ENCODE measurements at regions of chr13 and their contacts with region 1.

Region 1: DNA sequence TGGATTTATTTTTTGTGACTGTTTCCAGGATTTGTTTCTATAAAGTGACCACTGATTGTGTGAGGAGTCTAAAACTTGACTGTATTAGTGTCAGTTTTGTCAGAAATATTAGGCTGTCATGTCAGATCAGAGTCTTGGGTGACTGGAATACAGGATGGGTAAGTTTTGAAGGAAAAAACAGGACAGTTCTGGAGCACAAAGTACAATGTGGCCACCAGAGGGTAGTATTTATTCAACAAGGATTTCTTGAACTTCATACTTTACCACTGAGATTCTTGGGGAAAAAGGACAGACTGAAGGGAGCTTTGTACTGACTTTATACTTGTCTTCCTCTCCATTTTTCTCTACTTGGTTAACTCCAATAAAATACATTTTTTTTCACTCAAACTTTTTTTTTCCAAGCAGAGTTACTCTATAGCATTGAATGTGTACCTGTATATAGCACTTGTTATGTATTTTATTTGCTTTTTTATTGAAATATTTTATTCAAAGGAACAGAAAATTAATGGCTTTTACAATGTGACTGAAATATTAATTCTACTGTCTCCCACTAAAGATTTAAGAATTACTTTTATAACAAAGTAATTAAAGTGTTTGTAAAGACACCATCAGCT is 51.1 kb downstream of the LMO7 start:
- DNase-seq: no peak
- H3K4me3 ChIP-seq: no peak overlapping the region
- H3K27ac ChIP-seq: no peak overlapping the region
- H3K4me1 ChIP-seq: no peaks in the 10 kb centered on the region
- H3K27me3 ChIP-seq: no peaks in the 10 kb centered on the region
- CTCF ChIP-seq: peak; percentile 28 to 51 (median 45)
- EP300 ChIP-seq: no peak
- POLR2A ChIP-seq: no peak

Region 2: DNA sequence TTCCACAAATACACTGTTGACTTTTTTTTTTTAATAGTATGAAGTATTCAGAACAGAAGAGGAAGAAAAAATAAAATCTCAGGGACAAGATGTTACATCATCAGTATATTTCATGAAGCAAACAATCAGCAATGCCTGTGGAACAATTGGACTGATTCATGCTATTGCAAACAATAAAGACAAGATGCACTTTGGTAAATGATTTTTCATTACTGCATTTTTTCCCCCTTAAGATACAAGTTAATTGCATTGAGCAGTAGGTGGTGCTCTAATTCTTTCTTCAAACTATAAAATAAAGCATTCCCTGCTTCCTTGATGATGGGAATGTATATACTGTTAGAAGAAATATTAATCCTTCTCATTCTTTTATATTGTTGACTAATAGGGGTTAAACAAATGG is 120.6 kb before region 1 on chr13:
- in situ Hi-C with region 1: no loop called
- intact Hi-C with region 1: no loop called
- DNase-seq: no peak
- H3K4me3 ChIP-seq: no peak overlapping the region
- H3K27ac ChIP-seq: no peak overlapping the region
- H3K4me1 ChIP-seq: no peaks in the 10 kb centered on the region
- H3K27me3 ChIP-seq: no peaks in the 10 kb centered on the region
- CTCF ChIP-seq: no peak
- EP300 ChIP-seq: no peak
- POLR2A ChIP-seq: no peak

Region 3: GRCh38 chr13:75771818-75772217 is 84.6 kb after region 1 on chr13:
- in situ Hi-C with region 1: no loop called
- intact Hi-C with region 1: no loop called
- DNase-seq: no peak
- H3K4me3 ChIP-seq: no peak overlapping the region
- H3K27ac ChIP-seq: no peak overlapping the region
- H3K4me1 ChIP-seq: peaks cover 4 to 36% (median 16%) of the 10 kb centered on the region in 4 donors
- H3K27me3 ChIP-seq: no peaks in the 10 kb centered on the region
- CTCF ChIP-seq: no peak
- EP300 ChIP-seq: no peak
- POLR2A ChIP-seq: no peak

Region 4: GRCh38 chr13:75870397-75870903 is 183.2 kb after region 1 on chr13:
- in situ Hi-C with region 1: loop called in 2 of 4 experiments (anchors 25 kb)
- intact Hi-C with region 1: no loop called
- DNase-seq: no peak
- H3K4me3 ChIP-seq: peak overlapping the region in 3 of 4 donors; percentile 13 to 37 (median 23)
- H3K27ac ChIP-seq: no peak overlapping the region
- H3K4me1 ChIP-seq: peaks cover 0 to 6% (median 2%) of the 10 kb centered on the region in 4 donors
- H3K27me3 ChIP-seq: peaks cover 6% of the 10 kb centered on the region
- CTCF ChIP-seq: peak; percentile 65 to 78 (median 70)
- EP300 ChIP-seq: no peak
- POLR2A ChIP-seq: no peak

Region 5: DNA sequence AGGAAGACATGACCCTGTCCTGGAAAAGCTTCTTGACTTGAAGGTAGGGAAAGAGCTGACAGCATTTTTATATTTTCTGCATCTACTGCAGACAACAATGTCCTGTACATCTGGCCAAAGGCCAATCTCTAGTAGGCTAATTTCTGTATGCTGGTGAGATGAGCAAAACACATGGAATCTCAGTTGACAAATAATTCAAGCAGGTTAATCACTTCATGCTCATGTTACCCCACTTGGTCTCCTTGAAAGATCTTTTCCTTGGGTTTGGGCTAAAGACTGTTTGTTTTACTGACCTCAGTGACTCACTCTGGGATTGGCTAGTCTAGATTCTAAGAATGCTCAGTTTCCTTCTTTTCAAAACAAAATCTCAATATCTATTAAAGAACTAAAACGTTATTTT is 247.6 kb after region 1 on chr13:
- in situ Hi-C with region 1: no loop called
- intact Hi-C with region 1: no loop called
- DNase-seq: no peak
- H3K4me3 ChIP-seq: no peak overlapping the region
- H3K27ac ChIP-seq: no peak overlapping the region
- H3K4me1 ChIP-seq: no peaks in the 10 kb centered on the region
- H3K27me3 ChIP-seq: no peaks in the 10 kb centered on the region
- CTCF ChIP-seq: no peak
- EP300 ChIP-seq: no peak
- POLR2A ChIP-seq: no peak

Region 6: DNA sequence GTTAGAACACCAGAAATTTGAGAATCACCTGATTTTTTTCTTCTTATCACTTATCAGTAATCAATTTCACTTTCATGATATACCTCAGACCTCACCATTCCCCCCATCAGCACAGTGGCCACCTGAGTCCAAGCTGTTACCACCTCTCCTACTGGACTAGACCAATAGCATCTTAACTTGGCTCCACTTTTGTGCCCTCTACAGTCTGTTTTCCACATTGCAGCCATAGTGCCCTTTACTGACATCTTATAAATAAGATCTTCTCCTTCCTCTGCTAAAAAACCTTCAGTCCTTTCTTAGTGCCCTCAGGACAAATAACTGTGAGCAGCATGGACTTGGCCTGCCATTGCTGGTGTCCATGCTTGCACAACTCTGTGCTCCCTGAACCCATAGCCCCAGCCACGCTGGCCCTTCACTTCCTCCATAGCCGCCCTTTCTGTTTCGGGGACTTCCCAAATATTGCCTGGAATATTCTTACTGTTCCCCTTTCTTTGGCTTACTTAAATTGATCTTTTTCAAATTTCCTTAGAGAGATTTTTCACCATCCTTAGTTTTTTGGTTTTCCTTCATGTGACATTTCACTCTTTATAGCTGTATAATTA is 329.6 kb after region 1 on chr13:
- in situ Hi-C with region 1: loop called in 1 of 4 experiments (anchors 25 kb)
- intact Hi-C with region 1: no loop called
- DNase-seq: peak; percentile 8
- H3K4me3 ChIP-seq: no peak overlapping the region
- H3K27ac ChIP-seq: no peak overlapping the region
- H3K4me1 ChIP-seq: peaks cover 0 to 3% (median 0%) of the 10 kb centered on the region in 4 donors
- H3K27me3 ChIP-seq: no peaks in the 10 kb centered on the region
- CTCF ChIP-seq: peak in 4 of 5 experiments; percentile 27 to 34 (median 32)
- EP300 ChIP-seq: no peak
- POLR2A ChIP-seq: no peak

Region 7: DNA sequence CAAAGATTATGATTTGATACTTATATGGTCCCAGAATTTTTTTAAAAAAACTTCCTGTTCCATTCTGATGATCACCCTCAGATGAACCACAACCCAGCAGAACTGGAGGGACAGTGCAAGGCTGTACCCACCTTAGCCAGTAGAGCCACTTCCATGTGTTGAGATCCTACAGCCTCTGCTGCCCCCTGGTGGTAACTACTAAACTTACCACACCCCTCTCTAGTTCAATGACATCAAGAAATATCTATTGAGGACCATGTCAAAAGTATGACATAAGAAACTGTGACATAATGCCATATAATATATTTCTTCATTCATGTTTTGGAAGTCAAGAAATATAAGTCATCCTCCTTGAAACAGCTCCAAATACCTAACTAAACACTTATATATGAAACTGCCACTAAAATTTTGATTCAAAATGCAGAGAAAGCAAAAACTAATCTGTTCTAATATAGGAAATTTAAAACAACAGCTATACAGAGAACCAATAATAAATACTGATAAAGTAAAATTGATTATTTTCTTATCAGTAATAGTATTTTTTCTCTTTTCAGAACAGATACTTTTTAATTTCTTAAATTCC is 786.4 kb after region 1 on chr13:
- in situ Hi-C with region 1: loop called (anchors 25 kb)
- intact Hi-C with region 1: no loop called
- DNase-seq: peak; percentile 73
- H3K4me3 ChIP-seq: no peak overlapping the region
- H3K27ac ChIP-seq: no peak overlapping the region
- H3K4me1 ChIP-seq: no peaks in the 10 kb centered on the region
- H3K27me3 ChIP-seq: no peaks in the 10 kb centered on the region
- CTCF ChIP-seq: peak; percentile 84 to 92 (median 85)
- EP300 ChIP-seq: no peak
- POLR2A ChIP-seq: no peak

Region 8: GRCh38 chr13:76499891-76500290 is 812.6 kb after region 1 on chr13:
- in situ Hi-C with region 1: loop called in 1 of 4 experiments (anchors 25 kb)
- intact Hi-C with region 1: no loop called
- DNase-seq: no peak
- H3K4me3 ChIP-seq: no peak overlapping the region
- H3K27ac ChIP-seq: no peak overlapping the region
- H3K4me1 ChIP-seq: no peaks in the 10 kb centered on the region
- H3K27me3 ChIP-seq: no peaks in the 10 kb centered on the region
- CTCF ChIP-seq: no peak
- EP300 ChIP-seq: no peak
- POLR2A ChIP-seq: no peak

Region 9: DNA sequence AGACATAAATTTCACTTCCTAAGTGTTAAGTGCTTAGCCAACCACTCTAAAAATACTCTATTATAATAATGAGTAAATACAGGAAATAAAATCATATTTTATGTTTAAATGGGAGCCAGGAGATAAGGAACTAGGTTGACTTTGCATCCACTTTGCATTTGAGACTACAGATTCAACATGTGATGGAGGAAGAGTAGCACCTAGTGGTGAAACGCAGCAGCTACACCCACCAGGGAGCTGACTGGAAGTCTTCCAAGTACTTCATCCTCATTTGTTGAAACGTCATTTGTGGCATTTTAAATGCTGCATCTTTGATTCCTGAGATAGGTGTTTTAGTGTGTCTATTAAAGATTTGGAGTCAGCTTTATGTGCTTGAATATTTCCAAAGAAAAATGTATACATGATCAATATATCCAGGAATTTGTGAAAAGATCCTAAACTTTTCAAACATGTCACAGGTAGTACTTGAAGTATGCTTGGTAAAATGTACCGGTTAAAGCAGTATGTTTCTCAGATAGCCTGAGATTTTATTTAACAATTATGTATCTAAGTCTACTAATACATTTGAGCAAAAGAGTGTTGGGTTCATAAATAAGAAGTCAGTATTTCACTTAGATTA is 1216.4 kb after region 1 on chr13:
- in situ Hi-C with region 1: loop called in 3 of 4 experiments (anchors 25 kb)
- intact Hi-C with region 1: no loop called
- DNase-seq: peak; percentile 65
- H3K4me3 ChIP-seq: no peak overlapping the region
- H3K27ac ChIP-seq: no peak overlapping the region
- H3K4me1 ChIP-seq: no peaks in the 10 kb centered on the region
- H3K27me3 ChIP-seq: no peaks in the 10 kb centered on the region
- CTCF ChIP-seq: peak; percentile 90 to 99 (median 96)
- EP300 ChIP-seq: no peak
- POLR2A ChIP-seq: no peak

Measured in transverse colon (tissue), 4 donors.